Activated CD4-positive, alpha-beta T cell treated with anti-CD3 and anti-CD28 coated beads for 36 hours (primary cell): ENCODE measurements at regions of chr17 and their contacts with region 1.

Region 1: GRCh38 chr17:81977211-81978027 is at the start of gene ASPSCR1:
- DNase-seq: peak; percentile 95
- ATAC-seq: peak; percentile 83
- H3K4me3 Mint-ChIP-seq: peak within 1 kb of the TSS; percentile 94
- H3K27ac Mint-ChIP-seq: peak within 1 kb of the TSS; percentile 98
- H3K4me1 Mint-ChIP-seq: peaks cover 32% of the 10 kb centered on the region
- H3K27me3 Mint-ChIP-seq: no peaks in the 10 kb centered on the region
- total RNA-seq, gene ASPSCR1: 23.3 to 26.5 TPM

Region 2: GRCh38 chr17:81512560-81513371 is 464.7 kb before region 1 on chr17 and contains the start of gene ACTG1:
- CTCF ChIA-PET with region 1: no interaction called
- POLR2A ChIA-PET with region 1: no interaction called
- intact Hi-C with region 1: loop called in 1 of 2 experiments (anchors 2 kb)
- DNase-seq: peak; percentile 95
- ATAC-seq: peak; percentile 61
- H3K4me3 Mint-ChIP-seq: peak within 1 kb of the TSS; percentile 97
- H3K27ac Mint-ChIP-seq: peak within 1 kb of the TSS; percentile 89
- H3K4me1 Mint-ChIP-seq: peaks cover 21% of the 10 kb centered on the region
- H3K27me3 Mint-ChIP-seq: no peaks in the 10 kb centered on the region
- total RNA-seq, gene ACTG1: 4,119 to 5,987 TPM

Region 3: DNA sequence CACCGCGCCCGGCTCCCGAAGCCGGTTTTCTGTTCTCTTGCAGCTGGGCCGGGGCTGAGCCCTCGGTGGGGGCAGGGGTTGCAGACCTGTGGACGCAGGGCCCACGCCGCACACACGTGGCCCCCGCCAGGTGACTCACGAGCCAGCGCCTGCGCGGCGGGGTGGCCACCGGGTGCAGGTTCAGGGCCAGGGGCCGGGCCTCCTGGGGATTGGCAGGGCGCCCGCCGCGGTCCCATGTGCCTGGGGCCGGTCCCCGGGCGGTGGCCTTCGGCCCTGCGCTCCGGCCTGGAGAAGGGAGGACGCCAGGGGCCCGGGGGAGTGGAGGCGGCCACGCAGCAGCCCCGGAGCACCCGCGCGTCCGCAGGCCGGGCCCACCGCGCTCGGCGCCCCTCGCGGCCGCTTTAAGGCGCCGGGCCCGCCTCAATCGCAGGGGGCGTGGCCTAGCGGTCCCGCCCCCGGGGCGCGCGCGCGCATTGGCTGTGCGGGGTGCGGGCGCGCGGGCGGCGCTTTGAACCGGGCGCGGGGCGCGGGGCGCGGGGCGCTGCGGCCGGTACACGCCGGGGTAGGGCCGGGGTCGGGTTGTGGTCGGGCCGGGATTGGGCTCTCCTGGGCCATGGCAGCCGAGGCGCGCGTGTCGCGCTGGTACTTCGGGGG is 265.5 kb before region 1 on chr17 and contains the start of gene SLC25A10:
- CTCF ChIA-PET with region 1: no interaction called
- POLR2A ChIA-PET with region 1: no interaction called
- intact Hi-C with region 1: loop called in 1 of 2 experiments (anchors 1 kb)
- DNase-seq: peak; percentile 93
- ATAC-seq: peak; percentile 87
- H3K4me3 Mint-ChIP-seq: peak within 1 kb of the TSS; percentile 89
- H3K27ac Mint-ChIP-seq: peak within 1 kb of the TSS; percentile 84
- H3K4me1 Mint-ChIP-seq: peaks cover 24% of the 10 kb centered on the region
- H3K27me3 Mint-ChIP-seq: no peaks in the 10 kb centered on the region
- total RNA-seq, gene SLC25A10: 28.6 to 31.8 TPM

Region 4: DNA sequence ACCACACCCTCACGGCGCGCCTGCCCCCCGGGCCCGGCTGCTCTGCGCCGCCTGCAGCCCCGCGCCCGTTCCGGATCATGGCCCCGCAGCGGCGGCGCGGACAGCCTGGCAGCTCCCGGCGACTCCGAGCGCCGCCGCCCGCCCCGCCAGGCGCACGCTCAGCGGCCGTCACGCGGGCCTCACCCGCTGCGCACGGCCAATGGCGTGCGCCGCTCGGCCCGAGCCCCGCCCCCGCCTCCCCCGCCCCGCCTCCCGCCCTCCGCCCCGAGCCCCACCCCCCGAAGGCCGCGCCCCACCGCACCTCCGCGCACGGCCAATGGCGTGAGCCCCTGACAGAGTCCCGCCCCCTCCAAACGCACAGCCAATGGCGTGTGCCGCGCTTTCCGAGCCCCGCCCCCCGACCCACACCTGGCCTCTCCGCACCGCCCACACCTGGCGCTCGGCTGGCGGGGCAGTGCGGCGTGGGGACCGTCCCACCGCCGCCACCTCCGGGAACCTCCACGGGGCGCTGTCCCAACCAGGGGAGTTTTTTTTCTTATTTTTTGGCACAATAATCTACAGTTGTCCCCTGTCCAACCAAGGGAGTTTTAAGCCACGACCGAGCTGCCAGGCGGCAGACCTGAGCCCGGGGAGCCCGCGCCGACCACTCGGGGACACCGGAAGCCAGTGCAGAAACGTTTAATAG is 66.0 kb before region 1 on chr17 and contains the start of gene PCYT2:
- CTCF ChIA-PET with region 1: no interaction called
- POLR2A ChIA-PET with region 1: no interaction called
- intact Hi-C with region 1: loop called in 1 of 2 experiments (anchors 1 kb)
- DNase-seq: peak; percentile 97
- ATAC-seq: peak; percentile 96
- H3K4me3 Mint-ChIP-seq: peak within 1 kb of the TSS; percentile 79
- H3K27ac Mint-ChIP-seq: no peak within 1 kb of the TSS
- H3K4me1 Mint-ChIP-seq: peaks cover 14% of the 10 kb centered on the region
- H3K27me3 Mint-ChIP-seq: no peaks in the 10 kb centered on the region
- total RNA-seq, gene PCYT2: 19.7 to 24.0 TPM

Region 5: DNA sequence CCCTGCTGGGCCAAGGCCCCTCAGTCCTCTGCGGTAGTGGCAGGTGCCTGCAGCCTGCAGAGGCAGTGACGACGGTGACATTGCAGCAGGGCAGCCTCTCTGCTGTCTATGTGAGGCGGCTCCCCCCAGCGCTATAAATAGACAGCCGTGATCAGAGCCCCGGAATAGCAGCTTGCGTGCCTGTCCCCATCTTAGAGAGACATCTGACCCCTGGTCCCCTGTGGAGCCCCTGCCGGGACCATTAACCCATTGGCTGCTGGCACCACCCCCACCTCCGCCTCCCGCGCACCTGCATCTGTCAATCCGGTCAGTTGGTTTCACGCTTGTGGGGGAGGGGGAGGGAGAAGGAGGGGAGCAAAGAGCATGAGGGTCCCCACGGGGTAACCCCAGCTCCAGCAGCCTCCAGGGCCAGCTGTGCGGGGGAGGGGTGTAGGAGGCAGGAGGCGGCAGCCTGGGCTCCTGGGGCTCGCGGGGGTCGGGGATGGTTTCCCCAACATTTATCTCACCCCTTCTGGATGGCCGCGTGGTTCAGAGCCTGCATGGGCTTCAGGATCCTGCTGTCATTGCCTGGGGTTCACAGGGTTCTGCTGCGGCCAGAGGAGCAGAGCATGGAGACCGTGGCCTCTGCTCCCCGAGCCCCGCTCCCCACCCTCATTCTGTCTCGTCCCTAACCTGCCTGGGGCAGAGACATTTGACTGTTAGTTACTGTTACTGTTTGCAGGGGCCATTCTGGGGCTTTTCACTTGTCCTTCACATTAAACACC is 35.4 kb before region 1 on chr17:
- CTCF ChIA-PET with region 1: no interaction called
- POLR2A ChIA-PET with region 1: no interaction called
- intact Hi-C with region 1: loop called in 1 of 2 experiments (anchors 1 kb)
- DNase-seq: no peak
- ATAC-seq: no peak
- H3K4me3 Mint-ChIP-seq: no peak overlapping the region
- H3K27ac Mint-ChIP-seq: no peak overlapping the region
- H3K4me1 Mint-ChIP-seq: peaks cover 5% of the 10 kb centered on the region
- H3K27me3 Mint-ChIP-seq: peaks cover 5% of the 10 kb centered on the region

Region 6: GRCh38 chr17:82273327-82274133 is 296.1 kb after region 1 on chr17 and contains the start of gene CSNK1D:
- CTCF ChIA-PET with region 1: no interaction called
- POLR2A ChIA-PET with region 1: no interaction called
- intact Hi-C with region 1: loop called in 1 of 2 experiments (anchors 5 kb)
- DNase-seq: peak; percentile 96
- ATAC-seq: peak; percentile 81
- H3K4me3 Mint-ChIP-seq: peak within 1 kb of the TSS; percentile 90
- H3K27ac Mint-ChIP-seq: peak within 1 kb of the TSS; percentile 94
- H3K4me1 Mint-ChIP-seq: peaks cover 39% of the 10 kb centered on the region
- H3K27me3 Mint-ChIP-seq: no peaks in the 10 kb centered on the region
- total RNA-seq, gene CSNK1D: 118 to 182 TPM